IMR-90 (cell line): ENCODE measurements at regions of chr2 and their contacts with region 1.

Region 1: DNA sequence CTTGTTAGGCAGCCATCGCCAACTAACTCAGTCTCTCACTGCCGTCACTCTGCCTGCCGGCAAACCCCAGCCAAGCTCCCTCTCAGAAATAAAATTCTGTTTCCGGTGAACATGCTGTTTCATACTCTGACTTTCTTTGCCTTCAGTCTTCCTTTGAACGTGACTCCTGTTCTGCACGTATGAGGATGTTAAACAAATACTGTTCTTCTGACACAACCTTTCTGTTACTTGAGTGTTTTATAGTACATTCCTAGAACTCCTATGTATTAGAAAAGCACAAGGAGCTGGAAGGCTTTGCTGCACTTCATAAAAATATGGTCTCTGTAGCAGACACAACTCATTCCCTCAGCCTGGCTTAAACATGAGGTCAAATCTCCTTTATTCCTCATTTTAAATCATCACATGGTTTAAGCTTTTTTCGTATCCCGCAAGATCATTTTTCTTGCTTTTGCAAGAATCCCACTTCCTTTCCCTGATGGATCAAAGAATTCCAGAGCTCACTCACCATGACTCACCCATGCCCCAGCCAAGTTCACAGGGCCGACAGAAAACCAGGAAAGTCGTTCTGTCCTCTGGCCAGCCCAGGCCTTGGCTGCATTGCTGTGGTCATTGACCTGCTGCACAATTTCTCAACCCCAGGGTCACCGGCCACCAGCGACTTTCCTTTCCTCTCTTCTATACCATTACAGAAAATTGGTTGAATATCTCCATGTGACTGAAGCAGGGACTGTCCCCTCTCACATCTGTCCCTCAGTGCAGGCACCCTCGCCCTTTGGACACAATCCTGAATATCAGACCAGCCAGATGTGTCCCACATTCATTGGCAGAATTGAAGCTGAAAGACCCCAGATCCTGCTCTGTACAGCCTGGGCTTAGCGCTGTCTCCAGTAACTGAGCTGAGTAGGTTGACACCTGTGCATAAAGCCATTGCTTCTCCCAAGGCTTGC is 183.1 kb upstream of the ARL4C start:
- DNase-seq: peak; percentile 99
- ATAC-seq: peak; percentile 75
- H3K4me3 ChIP-seq: peak overlapping the region; percentile 5; the same call in 1 of the 2 replicates
- H3K27ac ChIP-seq: peak overlapping the region; percentile 90
- H3K4me1 ChIP-seq: peaks cover 34% of the 10 kb centered on the region
- H3K27me3 ChIP-seq: no peaks in the 10 kb centered on the region
- CTCF ChIP-seq: no peak
- POLR2A ChIP-seq: peak; percentile 73; the same call in 1 of the 2 replicates
- RAD21 ChIP-seq: peak; percentile 28

Region 2: GRCh38 chr2:234595829-234596228 is 84.2 kb before region 1 on chr2:
- CTCF ChIA-PET with region 1: no interaction called
- POLR2A ChIA-PET with region 1: interaction called, 3 read pairs
- dilution Hi-C with region 1: no loop called
- in situ Hi-C with region 1: no loop called
- intact Hi-C with region 1: loop called (anchors 5 kb)
- DNase-seq: peak; percentile 97
- ATAC-seq: peak; percentile 92
- H3K4me3 ChIP-seq: no peak overlapping the region
- H3K27ac ChIP-seq: peak overlapping the region; percentile 85
- H3K4me1 ChIP-seq: peaks cover 17% of the 10 kb centered on the region
- H3K27me3 ChIP-seq: no peaks in the 10 kb centered on the region
- CTCF ChIP-seq: no peak
- POLR2A ChIP-seq: no peak
- RAD21 ChIP-seq: peak; percentile 15; the same call in 1 of the 2 replicates

Region 3: DNA sequence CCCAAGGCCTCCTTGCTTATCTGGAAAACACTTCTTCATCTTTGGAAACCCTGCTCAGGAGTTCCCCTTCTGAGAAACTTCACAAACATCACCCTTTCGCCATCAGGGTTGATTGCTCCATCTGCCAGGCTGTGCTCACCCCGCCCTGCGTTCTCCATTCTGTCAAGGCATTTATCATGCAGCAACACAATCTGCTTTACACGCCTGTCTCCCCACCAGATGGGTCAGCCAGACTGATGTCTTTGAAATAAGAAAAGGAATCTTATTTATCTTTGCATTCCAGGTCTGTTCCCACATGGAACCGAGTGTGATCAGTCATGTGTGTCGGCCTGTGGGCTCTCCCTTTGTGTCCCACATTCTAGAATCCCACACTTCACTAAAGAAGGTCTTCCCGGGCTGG is 73.1 kb before region 1 on chr2:
- CTCF ChIA-PET with region 1: no interaction called
- POLR2A ChIA-PET with region 1: no interaction called
- dilution Hi-C with region 1: no loop called
- in situ Hi-C with region 1: no loop called
- intact Hi-C with region 1: no loop called
- DNase-seq: peak; percentile 5
- ATAC-seq: no peak
- H3K4me3 ChIP-seq: no peak overlapping the region
- H3K27ac ChIP-seq: no peak overlapping the region
- H3K4me1 ChIP-seq: no peaks in the 10 kb centered on the region
- H3K27me3 ChIP-seq: no peaks in the 10 kb centered on the region
- CTCF ChIP-seq: no peak
- POLR2A ChIP-seq: no peak
- RAD21 ChIP-seq: no peak

Region 4: GRCh38 chr2:234823877-234824376 is 143.9 kb after region 1 on chr2:
- CTCF ChIA-PET with region 1: no interaction called
- POLR2A ChIA-PET with region 1: no interaction called
- dilution Hi-C with region 1: no loop called
- in situ Hi-C with region 1: no loop called
- intact Hi-C with region 1: loop called (anchors 5 kb)
- DNase-seq: peak; percentile 98
- ATAC-seq: peak; percentile 92
- H3K4me3 ChIP-seq: no peak overlapping the region
- H3K27ac ChIP-seq: peak overlapping the region; percentile 95
- H3K4me1 ChIP-seq: peaks cover 14% of the 10 kb centered on the region
- H3K27me3 ChIP-seq: no peaks in the 10 kb centered on the region
- CTCF ChIP-seq: no peak
- POLR2A ChIP-seq: no peak
- RAD21 ChIP-seq: no peak; the same call in 1 of the 2 replicates

Region 5: GRCh38 chr2:234881413-234882241 is 201.6 kb after region 1 on chr2:
- CTCF ChIA-PET with region 1: interaction called, 4 read pairs
- POLR2A ChIA-PET with region 1: no interaction called
- dilution Hi-C with region 1: no loop called
- in situ Hi-C with region 1: no loop called
- intact Hi-C with region 1: loop called (anchors 2 kb)
- DNase-seq: peak; percentile 97
- ATAC-seq: peak; percentile 88
- H3K4me3 ChIP-seq: peak overlapping the region; percentile 12; the same call in 1 of the 2 replicates
- H3K27ac ChIP-seq: peak overlapping the region; percentile 96
- H3K4me1 ChIP-seq: peaks cover 13% of the 10 kb centered on the region
- H3K27me3 ChIP-seq: no peaks in the 10 kb centered on the region
- CTCF ChIP-seq: peak; percentile 91
- POLR2A ChIP-seq: no peak
- RAD21 ChIP-seq: peak; percentile 64

Region 6: GRCh38 chr2:234981197-234982117 is 301.4 kb after region 1 on chr2:
- CTCF ChIA-PET with region 1: no interaction called
- POLR2A ChIA-PET with region 1: no interaction called
- dilution Hi-C with region 1: no loop called
- in situ Hi-C with region 1: no loop called
- intact Hi-C with region 1: loop called (anchors 10 kb)
- DNase-seq: peak; percentile 100
- ATAC-seq: peak; percentile 82
- H3K4me3 ChIP-seq: no peak overlapping the region
- H3K27ac ChIP-seq: peak overlapping the region; percentile 86
- H3K4me1 ChIP-seq: peaks cover 54% of the 10 kb centered on the region
- H3K27me3 ChIP-seq: no peaks in the 10 kb centered on the region
- CTCF ChIP-seq: peak; percentile 44
- POLR2A ChIP-seq: peak; percentile 71
- RAD21 ChIP-seq: peak; percentile 46

Region 7: GRCh38 chr2:235116885-235117492 is 437.0 kb after region 1 on chr2:
- CTCF ChIA-PET with region 1: no interaction called
- POLR2A ChIA-PET with region 1: no interaction called
- dilution Hi-C with region 1: no loop called
- in situ Hi-C with region 1: no loop called
- intact Hi-C with region 1: loop called (anchors 5 kb)
- DNase-seq: peak; percentile 48
- ATAC-seq: peak; percentile 69
- H3K4me3 ChIP-seq: no peak overlapping the region
- H3K27ac ChIP-seq: no peak overlapping the region
- H3K4me1 ChIP-seq: no peaks in the 10 kb centered on the region
- H3K27me3 ChIP-seq: peaks cover 4% of the 10 kb centered on the region
- CTCF ChIP-seq: peak; percentile 76
- POLR2A ChIP-seq: no peak
- RAD21 ChIP-seq: peak; percentile 74